Left cardiac atrium (tissue), 4 donors: ENCODE measurements at regions of chr15 and their contacts with region 1.

Region 1: DNA sequence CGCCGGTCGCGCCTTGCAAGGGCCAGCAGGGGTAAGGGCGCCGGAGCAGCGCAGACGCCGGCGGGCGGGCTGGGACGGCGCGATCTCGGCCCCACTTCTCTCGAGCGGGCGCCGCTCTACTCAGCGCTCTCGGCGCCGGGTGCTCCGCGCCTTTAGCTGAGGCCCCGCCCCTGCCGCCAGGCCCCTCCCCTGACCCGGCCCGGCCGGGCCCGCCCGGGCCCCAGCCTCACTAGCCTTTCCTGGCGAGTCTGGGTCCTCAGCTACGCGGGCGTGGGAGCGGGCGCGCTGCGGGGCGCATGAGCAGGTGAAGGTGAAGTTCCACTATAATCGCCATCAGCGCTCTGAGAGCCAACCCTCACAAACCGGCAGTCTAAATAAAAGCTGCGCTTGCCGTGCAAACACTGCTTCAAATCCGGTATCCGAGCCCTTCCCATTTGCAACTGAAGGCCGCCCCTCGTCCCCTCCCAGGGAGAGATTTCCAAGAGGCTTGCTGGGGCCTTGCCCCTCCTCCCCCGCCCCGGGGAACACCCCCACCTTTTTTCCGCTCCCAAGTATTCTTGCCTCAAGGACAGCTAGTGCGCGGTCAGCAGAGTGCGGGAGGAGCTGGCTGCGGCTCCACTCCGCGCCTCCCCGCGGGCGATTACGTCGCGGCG is at the start of gene RPP25:
- DNase-seq: peak; percentile 82
- ATAC-seq: peak; percentile 91 to 92
- total RNA-seq, gene RPP25: 6.3 to 6.6 TPM

Region 2: GRCh38 chr15:74635228-74635627 is 321.5 kb before region 1 on chr15:
- intact Hi-C with region 1: loop called (anchors 10 kb)
- DNase-seq: peak; percentile 64
- ATAC-seq: peak; percentile 72 to 74